Gastrocnemius medialis (tissue), 4 donors: ENCODE measurements at regions of chr6 and their contacts with region 1.

Region 1: GRCh38 chr6:36851149-36851614 is 11.9 kb upstream of the CPNE5 start:
- DNase-seq: peak in 1 of 2 donors; percentile 54
- ATAC-seq: peak; percentile 37 to 46
- H3K4me3 ChIP-seq: no peak overlapping the region
- H3K27ac ChIP-seq: no peak overlapping the region
- H3K4me1 ChIP-seq: peaks cover 29 to 34% of the 10 kb centered on the region in 2 donors
- H3K27me3 ChIP-seq: no peaks in the 10 kb centered on the region
- CTCF ChIP-seq: peak; percentile 69 to 79 (median 73)
- POLR2A ChIP-seq: no peak

Region 2: DNA sequence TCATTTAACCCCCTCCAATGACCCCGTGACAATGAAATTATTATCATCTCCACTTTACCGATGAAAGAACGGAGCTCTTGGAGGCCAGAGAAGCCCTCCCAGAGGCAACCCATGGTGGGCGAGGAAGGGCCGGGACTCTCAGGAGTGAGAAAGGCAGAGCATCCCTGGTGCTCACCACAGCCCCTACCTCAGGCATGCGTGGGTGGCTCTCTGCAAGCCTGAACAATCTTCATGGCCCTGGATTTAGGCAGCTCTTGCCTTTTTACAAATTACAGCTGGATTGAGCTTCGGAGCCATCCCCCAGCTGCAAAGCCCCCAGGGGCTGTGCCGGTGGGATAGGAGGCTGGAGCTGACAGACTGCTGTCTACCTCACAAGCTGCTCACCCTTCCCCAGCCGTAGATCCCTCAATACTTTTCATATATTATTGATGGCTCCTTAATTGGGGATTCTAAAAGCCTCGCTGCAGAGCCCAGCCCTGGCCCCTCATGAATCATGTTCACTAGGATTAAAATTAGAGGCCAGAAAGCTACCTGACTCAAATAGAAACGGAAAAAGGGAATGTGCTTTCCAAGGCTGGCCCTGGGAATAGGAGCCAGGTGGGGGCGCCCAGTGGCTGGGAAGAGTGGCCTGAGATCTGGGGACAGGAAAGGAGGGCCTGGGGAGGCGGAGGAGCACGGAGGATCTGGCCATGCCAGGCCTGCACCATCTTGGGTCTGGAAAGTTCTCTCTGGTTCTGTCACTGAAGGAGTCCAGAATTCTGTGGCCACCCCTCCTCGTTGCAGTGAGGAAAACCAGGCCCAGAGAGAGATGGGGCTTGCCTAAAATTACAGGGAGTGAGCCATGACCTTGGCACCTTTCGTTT is 41.0 kb before region 1 on chr6:
- in situ Hi-C with region 1: no loop called
- intact Hi-C with region 1: loop called (anchors 2 kb)
- DNase-seq: no peak
- ATAC-seq: no peak
- H3K4me3 ChIP-seq: no peak overlapping the region
- H3K27ac ChIP-seq: no peak overlapping the region
- H3K4me1 ChIP-seq: no peaks in the 10 kb centered on the region
- H3K27me3 ChIP-seq: no peaks in the 10 kb centered on the region
- CTCF ChIP-seq: no peak
- POLR2A ChIP-seq: no peak